ENCODE measurements at regions of chr6 and their contacts with region 1.

Region 1: DNA sequence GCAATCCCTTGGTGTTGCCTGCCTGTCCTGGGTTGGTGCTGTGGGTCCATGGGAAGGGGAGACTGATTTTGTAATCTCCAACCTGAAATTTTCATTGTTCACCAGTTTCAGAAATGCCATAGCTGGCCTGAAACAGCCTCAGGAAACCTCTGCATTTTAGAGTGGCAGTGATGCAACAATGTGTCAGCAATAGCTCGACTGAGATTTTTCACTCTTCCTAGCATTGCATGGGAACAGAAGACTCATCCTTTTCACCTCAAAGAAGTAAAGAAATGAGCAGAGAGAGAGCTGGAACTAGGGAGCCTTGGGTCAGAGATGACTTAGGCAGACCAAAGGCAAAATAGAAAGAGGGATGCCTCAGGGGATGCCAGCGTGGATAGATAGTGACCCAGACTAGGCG is 23.7 kb upstream of the TMEM14A start:
- DNase-seq: no peak
- H3K4me3 ChIP-seq: no peak overlapping the region
- H3K4me3 Mint-ChIP-seq: no peak overlapping the region
- H3K27ac ChIP-seq: no peak overlapping the region
- H3K27ac Mint-ChIP-seq: no peak overlapping the region
- H3K4me1 ChIP-seq: no peaks in the 10 kb centered on the region
- H3K4me1 Mint-ChIP-seq: peaks cover 3 to 7% (median 4%) of the 10 kb centered on the region in 4 donors
- H3K27me3 ChIP-seq: peaks cover 6% of the 10 kb centered on the region
- H3K27me3 Mint-ChIP-seq: peaks cover 6 to 10% of the 10 kb centered on the region in 2 donors

Region 2: DNA sequence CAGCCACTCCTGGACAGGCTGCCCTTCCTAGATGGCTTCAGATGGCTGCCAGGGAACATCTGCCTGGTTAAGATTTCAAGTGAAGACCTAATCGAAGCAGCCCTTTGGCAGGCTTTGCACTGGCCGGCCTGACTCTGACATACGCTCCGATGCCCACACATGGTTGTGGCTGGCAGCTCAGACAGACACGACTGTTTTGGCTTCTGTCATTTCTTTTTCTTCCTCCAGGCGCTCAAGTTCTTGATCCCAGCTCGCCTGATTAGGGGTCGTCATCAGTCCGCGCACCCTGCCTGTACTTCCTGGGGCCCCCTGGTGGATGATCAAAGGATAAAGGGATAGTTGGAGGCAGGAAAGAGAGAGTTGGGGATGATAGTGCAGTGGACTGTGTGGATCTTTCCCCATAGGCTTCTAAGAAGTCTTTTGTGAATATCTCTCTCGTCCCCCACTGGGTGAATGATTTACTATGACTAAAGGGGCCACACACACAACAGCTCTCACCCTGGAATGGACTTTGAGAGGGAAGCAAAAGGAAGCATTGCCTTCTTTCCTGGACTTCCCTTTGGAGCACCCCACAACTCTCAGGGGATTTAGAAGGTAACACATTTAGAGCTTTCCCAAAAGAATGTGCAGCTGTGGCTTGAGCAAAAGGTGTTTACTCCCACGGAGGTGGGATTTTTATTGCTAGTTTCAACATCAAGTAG is 48.9 kb before region 1 on chr6:
- CTCF ChIA-PET with region 1: interaction called, 12 read pairs
- POLR2A ChIA-PET with region 1: no interaction called
- intact Hi-C with region 1: no loop called
- DNase-seq: peak in 1 of 5 donors; percentile 11
- H3K4me3 ChIP-seq: no peak overlapping the region
- H3K4me3 Mint-ChIP-seq: no peak overlapping the region
- H3K27ac ChIP-seq: no peak overlapping the region
- H3K27ac Mint-ChIP-seq: peak overlapping the region in 1 of 7 donors; percentile 15
- H3K4me1 ChIP-seq: no peaks in the 10 kb centered on the region
- H3K4me1 Mint-ChIP-seq: peaks cover 0 to 7% (median 4%) of the 10 kb centered on the region in 4 donors
- H3K27me3 ChIP-seq: no peaks in the 10 kb centered on the region
- H3K27me3 Mint-ChIP-seq: peaks cover 3 to 5% of the 10 kb centered on the region in 2 donors

Region 3: GRCh38 chr6:52635049-52635577 is 12.1 kb before region 1 on chr6:
- CTCF ChIA-PET with region 1: interaction called, 47 read pairs
- POLR2A ChIA-PET with region 1: no interaction called
- intact Hi-C with region 1: no loop called
- DNase-seq: no peak
- H3K4me3 ChIP-seq: no peak overlapping the region
- H3K4me3 Mint-ChIP-seq: peak overlapping the region in 5 of 8 donors; percentile 0 to 65 (median 4)
- H3K27ac ChIP-seq: no peak overlapping the region
- H3K27ac Mint-ChIP-seq: peak overlapping the region in 1 of 7 donors; percentile 14
- H3K4me1 ChIP-seq: no peaks in the 10 kb centered on the region
- H3K4me1 Mint-ChIP-seq: peaks cover 5 to 9% (median 8%) of the 10 kb centered on the region in 4 donors
- H3K27me3 ChIP-seq: no peaks in the 10 kb centered on the region
- H3K27me3 Mint-ChIP-seq: peaks cover 2 to 4% of the 10 kb centered on the region in 2 donors

Region 4: DNA sequence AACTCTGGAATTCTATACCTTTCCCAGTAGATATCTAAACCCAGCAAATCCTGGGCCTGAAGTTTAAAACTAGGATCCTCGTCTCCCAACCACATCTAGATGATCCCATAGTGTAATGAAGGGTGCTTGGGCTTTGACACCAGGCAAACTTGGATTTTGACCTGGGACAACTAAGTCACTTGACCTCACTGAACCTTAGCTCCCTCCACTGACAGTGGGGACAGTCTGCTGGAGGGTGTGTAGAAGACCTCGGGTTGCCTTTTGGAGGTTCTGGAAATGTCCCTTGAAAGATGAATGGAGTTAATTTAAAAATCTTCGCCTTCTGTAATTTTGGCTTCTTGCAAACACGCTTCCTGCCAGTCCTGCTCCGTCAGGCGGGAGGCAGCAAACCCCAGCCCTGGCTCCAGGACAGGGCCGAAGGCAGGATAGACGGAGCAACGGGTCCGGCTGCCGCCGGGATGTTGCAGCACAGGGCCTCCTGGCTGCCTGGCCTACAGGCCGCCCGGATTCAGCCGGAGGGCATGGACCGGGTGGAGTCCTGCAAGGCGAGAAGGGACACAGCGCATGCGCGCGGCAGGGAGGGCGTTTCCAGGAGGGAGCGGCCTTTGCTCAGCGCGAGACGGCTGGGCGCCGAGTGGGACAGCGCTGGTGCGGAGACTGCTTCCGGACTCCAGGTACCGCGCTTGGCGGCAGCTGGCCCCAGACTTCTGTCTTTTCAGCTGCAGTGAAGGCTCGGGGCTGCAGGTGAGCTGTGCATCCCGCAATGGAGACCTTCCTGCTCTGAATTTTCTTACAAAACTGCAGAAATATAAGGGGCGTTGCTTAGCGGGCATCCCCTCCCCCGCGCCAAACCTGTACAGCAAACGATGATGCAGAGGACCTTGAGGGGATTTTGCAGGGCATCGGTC is 23.6 kb after region 1 on chr6 and contains the start of gene TMEM14A:
- CTCF ChIA-PET with region 1: interaction called, 25 read pairs
- POLR2A ChIA-PET with region 1: no interaction called
- intact Hi-C with region 1: loop called (anchors 2 kb)
- DNase-seq: peak; percentile 89 to 90 (median 89)
- H3K4me3 ChIP-seq: peak within 1 kb of the TSS; percentile 37 to 84
- H3K4me3 Mint-ChIP-seq: peak within 1 kb of the TSS; percentile 89 to 95 (median 92)
- H3K27ac ChIP-seq: peak within 1 kb of the TSS; percentile 50
- H3K27ac Mint-ChIP-seq: peak within 1 kb of the TSS; percentile 2 to 97 (median 89)
- H3K4me1 ChIP-seq: peaks cover 25% of the 10 kb centered on the region
- H3K4me1 Mint-ChIP-seq: peaks cover 23 to 32% (median 27%) of the 10 kb centered on the region in 4 donors
- H3K27me3 ChIP-seq: no peaks in the 10 kb centered on the region
- H3K27me3 Mint-ChIP-seq: peaks cover 0 to 2% of the 10 kb centered on the region in 2 donors
- total RNA-seq, gene TMEM14A: 9.5 to 10.0 TPM